ENCODE measurements at regions of chr16 and their contacts with region 1.

Region 1: DNA sequence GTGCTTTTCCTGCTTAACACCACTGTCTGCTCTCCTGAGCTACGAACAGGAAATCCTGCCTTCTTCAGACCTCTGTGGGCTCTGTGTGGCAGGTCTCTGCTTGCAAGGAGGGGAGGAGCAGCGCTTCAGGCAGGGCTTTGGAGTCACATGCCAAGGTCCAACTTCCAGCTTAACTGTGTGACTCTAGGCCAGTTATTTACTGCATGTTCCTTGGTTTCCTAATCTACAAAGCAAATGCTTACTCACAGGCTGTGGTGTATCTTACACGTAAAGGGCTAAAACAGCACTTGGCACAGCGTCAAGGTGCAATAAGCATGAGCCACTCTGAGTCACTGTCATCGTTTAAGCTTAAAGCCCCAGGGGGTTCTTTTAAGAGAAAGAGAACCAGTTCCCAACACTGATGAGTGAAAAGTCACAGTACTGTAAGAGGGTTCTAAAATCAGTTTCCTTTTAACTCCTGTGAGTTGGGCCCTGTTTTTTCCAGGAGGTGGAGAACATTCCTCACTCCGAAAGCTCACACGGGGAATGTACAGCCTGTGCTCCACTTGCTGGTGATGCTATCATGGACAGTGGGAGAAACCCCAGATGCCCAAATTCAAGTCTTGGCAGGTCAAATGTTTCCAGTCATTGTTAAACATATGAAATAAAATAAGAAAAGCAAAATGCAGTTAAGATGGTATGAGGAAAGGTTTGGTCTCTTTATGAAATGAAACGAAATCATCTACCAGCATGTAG is 54.1 kb upstream of the BCAR1 start:
- DNase-seq: peak; percentile 87 to 89
- ATAC-seq: peak; percentile 94 to 98 (median 97)
- H3K4me3 ChIP-seq: peak overlapping the region; percentile 29
- H3K27ac ChIP-seq: peak overlapping the region; percentile 93
- H3K4me1 ChIP-seq: peaks cover 25% of the 10 kb centered on the region
- H3K27me3 ChIP-seq: no peaks in the 10 kb centered on the region
- CTCF ChIP-seq: no peak

Region 2: GRCh38 chr16:75251280-75252048 is 54.1 kb before region 1 on chr16 and contains the start of gene BCAR1:
- intact Hi-C with region 1: no loop called
- DNase-seq: peak; percentile 90 to 92
- ATAC-seq: peak; percentile 54 to 59 (median 57)
- H3K4me3 ChIP-seq: peak within 1 kb of the TSS; percentile 78
- H3K27ac ChIP-seq: peak within 1 kb of the TSS; percentile 93
- H3K4me1 ChIP-seq: peaks cover 84% of the 10 kb centered on the region
- H3K27me3 ChIP-seq: no peaks in the 10 kb centered on the region
- CTCF ChIP-seq: peak; percentile 5
- total RNA-seq, gene BCAR1: 61.8 to 108 (median 90.1) TPM

Region 3: DNA sequence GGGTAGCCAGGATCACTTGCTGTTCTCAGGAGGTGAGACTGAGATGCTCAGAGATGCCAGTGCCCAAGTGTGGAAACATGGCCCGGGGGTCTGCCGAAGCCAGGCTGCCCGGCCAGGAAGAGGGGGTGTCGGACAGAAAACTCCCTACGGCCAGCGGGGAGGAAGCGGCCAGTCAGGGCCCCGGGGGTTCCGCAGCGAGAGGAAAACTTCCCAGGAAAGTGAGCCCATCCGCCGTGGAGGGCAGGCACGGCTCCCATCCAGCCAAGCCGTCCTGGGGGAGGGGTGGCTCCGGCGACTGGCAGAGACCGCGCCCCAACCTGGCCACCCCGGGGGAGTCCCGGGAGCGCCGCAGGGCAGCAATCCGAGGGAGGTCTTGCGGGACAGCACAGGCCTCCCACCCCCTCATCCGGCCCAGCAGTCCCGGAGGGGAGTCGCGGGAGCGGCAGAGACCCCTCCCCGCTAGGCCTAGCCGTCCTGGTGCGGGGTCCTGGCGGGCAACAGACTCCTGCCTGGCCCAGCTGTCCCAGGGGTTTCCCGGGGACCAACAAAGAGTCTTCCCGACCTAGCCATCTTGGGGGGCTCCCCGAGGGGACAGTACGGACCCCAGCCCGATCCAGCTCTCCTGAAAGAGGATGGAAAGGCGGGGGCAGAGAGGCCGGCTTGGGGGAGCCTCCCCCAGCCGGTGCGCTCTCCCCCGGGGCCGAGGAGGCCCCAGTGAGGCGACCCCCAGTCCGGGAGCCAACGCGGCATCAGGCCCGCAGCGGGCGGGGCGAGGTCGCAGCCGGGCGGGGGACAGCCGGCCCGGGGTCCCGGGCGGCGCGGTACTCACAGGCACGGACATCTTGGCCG is 40.3 kb before region 1 on chr16:
- intact Hi-C with region 1: loop called in 1 of 2 experiments (anchors 5 kb)
- DNase-seq: peak; percentile 68 to 80
- ATAC-seq: peak; percentile 15 to 60 (median 20)
- H3K4me3 ChIP-seq: peak overlapping the region; percentile 100
- H3K27ac ChIP-seq: peak overlapping the region; percentile 99
- H3K4me1 ChIP-seq: peaks cover 69% of the 10 kb centered on the region
- H3K27me3 ChIP-seq: no peaks in the 10 kb centered on the region
- CTCF ChIP-seq: no peak

Region 4: GRCh38 chr16:75342308-75342829 is 36.8 kb after region 1 on chr16:
- intact Hi-C with region 1: loop called in 1 of 2 experiments (anchors 5 kb)
- DNase-seq: no peak
- ATAC-seq: peak in 3 of 4 donors; percentile 30 to 78 (median 70)
- H3K4me3 ChIP-seq: no peak overlapping the region
- H3K27ac ChIP-seq: no peak overlapping the region
- H3K4me1 ChIP-seq: peaks cover 21% of the 10 kb centered on the region
- H3K27me3 ChIP-seq: no peaks in the 10 kb centered on the region
- CTCF ChIP-seq: no peak

Region 5: GRCh38 chr16:75506567-75506966 is 201.0 kb after region 1 on chr16:
- intact Hi-C with region 1: no loop called
- DNase-seq: peak; percentile 48 to 63
- ATAC-seq: peak; percentile 78 to 89 (median 88)
- H3K4me3 ChIP-seq: no peak overlapping the region
- H3K27ac ChIP-seq: peak overlapping the region; percentile 12
- H3K4me1 ChIP-seq: no peaks in the 10 kb centered on the region
- H3K27me3 ChIP-seq: no peaks in the 10 kb centered on the region
- CTCF ChIP-seq: no peak

Measured in psoas muscle (tissue), 8 donors.